ENCODE measurements at regions of chr6 and their contacts with region 1.

Region 1: GRCh38 chr6:131427434-131428058 is 145.5 kb upstream of the ARG1 start:
- DNase-seq: no peak
- H3K4me3 Mint-ChIP-seq: no peak overlapping the region
- H3K27ac Mint-ChIP-seq: no peak overlapping the region
- H3K4me1 Mint-ChIP-seq: peaks cover 16% of the 10 kb centered on the region
- H3K27me3 Mint-ChIP-seq: no peaks in the 10 kb centered on the region

Region 2: GRCh38 chr6:131199568-131200272 is 227.8 kb before region 1 on chr6:
- intact Hi-C with region 1: no loop called
- DNase-seq: peak; percentile 76
- H3K4me3 Mint-ChIP-seq: peak overlapping the region; percentile 65
- H3K27ac Mint-ChIP-seq: peak overlapping the region; percentile 93
- H3K4me1 Mint-ChIP-seq: peaks cover 40% of the 10 kb centered on the region
- H3K27me3 Mint-ChIP-seq: no peaks in the 10 kb centered on the region

Region 3: GRCh38 chr6:131336538-131337080 is 90.9 kb before region 1 on chr6:
- intact Hi-C with region 1: no loop called
- DNase-seq: no peak
- H3K4me3 Mint-ChIP-seq: no peak overlapping the region
- H3K27ac Mint-ChIP-seq: no peak overlapping the region
- H3K4me1 Mint-ChIP-seq: no peaks in the 10 kb centered on the region
- H3K27me3 Mint-ChIP-seq: no peaks in the 10 kb centered on the region

Region 4: DNA sequence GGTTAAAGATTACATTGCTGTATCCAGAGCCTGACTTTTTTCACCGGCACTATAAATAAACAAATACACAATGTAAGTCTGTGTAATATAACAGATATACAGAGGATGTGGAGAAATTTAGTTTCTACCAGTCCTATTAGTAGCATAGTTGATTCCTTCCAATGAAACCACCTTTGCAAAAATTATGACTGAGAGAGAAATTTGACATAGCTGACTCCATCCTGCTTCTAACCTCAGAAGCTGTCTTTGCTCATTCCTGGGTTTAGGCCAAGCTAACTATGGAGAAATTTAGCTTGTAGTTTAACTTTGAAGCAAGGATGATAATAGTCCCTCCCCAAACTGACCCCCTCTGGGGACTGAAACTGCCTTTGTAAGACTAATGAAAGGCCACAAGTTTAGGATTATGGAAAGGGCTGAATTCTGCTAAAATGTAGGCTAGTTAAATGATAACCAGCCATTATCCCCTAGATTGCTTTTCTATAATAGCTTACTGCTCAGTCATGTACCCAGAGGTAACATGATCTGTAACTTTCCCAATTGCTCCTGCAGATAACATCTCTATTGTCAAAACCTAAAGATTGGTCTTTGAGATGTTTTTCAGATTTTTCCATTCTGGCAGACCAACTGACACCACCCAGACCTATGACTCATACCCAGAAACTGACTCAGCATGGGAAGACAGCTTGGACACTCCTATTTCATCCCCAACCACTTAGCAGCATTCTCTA is 27.3 kb before region 1 on chr6:
- intact Hi-C with region 1: no loop called
- DNase-seq: no peak
- H3K4me3 Mint-ChIP-seq: no peak overlapping the region
- H3K27ac Mint-ChIP-seq: peak overlapping the region; percentile 9
- H3K4me1 Mint-ChIP-seq: peaks cover 11% of the 10 kb centered on the region
- H3K27me3 Mint-ChIP-seq: no peaks in the 10 kb centered on the region

Region 5: GRCh38 chr6:131443514-131443913 is 16.0 kb after region 1 on chr6:
- intact Hi-C with region 1: loop called (anchors 2 kb)
- DNase-seq: peak; percentile 31
- H3K4me3 Mint-ChIP-seq: peak overlapping the region; percentile 87
- H3K27ac Mint-ChIP-seq: peak overlapping the region; percentile 93
- H3K4me1 Mint-ChIP-seq: peaks cover 38% of the 10 kb centered on the region
- H3K27me3 Mint-ChIP-seq: no peaks in the 10 kb centered on the region

Region 6: GRCh38 chr6:131555992-131556391 is 128.4 kb after region 1 on chr6:
- intact Hi-C with region 1: no loop called
- DNase-seq: no peak
- H3K4me3 Mint-ChIP-seq: no peak overlapping the region
- H3K27ac Mint-ChIP-seq: no peak overlapping the region
- H3K4me1 Mint-ChIP-seq: no peaks in the 10 kb centered on the region
- H3K27me3 Mint-ChIP-seq: peaks cover 15% of the 10 kb centered on the region